ENCODE measurements at regions of chr1 and their contacts with region 1.

Region 1: GRCh38 chr1:168603501-168604110 is 27.2 kb downstream of the XCL1 start:
- DNase-seq: peak; percentile 66 to 86
- ATAC-seq: peak; percentile 96

Region 2: DNA sequence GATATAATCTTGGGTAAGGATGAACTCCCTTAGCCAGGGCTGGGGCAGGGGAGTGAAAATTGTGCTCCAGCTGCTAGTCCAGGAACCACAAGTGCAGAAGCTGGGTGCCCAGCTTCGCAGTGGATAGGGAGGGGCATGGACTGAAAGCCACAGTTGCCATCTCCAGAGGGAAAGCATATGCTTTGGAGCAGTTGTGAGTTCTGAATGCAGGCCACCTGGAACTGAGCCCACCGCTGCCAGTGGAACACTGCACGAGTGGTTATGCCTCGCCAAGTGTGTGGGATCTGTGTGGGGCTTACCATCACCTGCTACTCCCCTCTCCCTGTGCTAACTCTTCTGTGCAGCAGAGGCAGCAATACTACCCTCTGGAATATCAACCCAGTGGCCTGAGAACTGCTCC is 283.8 kb after region 1 on chr1:
- intact Hi-C with region 1: no loop called
- DNase-seq: no peak
- ATAC-seq: no peak

Region 3: DNA sequence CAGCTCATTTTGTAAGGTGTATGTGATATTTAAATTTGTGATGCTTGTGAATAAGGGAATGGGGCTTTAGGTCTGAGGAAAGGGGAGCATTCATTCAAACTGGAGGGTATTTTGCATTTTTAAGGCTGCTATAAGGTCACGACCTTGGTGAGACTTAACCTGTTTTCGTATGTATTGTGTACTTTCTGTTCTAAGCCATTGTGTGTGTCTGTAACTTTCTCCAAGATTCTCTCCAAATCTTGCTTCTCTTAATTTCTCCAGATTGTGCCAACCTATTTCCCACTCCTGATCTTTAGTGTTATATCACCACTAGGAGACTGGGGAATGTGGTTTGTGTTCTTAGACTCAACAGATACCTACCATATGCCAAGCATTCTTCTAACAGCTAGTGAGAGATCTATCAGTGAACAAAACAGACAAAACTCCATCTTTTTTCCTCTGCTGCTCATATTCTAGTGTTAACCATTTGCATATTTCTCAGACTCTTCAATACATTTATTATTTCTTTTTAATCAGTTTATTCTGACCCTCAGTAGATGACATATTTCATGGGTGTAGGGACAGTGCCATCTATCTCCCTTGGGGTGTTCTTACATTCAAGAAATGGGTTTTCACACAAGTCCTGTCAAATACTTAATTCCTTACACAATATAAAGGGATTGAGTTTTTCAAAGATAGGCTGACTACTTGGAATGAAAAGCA is 530.3 kb after region 1 on chr1:
- intact Hi-C with region 1: loop called in 1 of 2 experiments (anchors 10 kb)
- DNase-seq: no peak
- ATAC-seq: peak; percentile 32

Region 4: DNA sequence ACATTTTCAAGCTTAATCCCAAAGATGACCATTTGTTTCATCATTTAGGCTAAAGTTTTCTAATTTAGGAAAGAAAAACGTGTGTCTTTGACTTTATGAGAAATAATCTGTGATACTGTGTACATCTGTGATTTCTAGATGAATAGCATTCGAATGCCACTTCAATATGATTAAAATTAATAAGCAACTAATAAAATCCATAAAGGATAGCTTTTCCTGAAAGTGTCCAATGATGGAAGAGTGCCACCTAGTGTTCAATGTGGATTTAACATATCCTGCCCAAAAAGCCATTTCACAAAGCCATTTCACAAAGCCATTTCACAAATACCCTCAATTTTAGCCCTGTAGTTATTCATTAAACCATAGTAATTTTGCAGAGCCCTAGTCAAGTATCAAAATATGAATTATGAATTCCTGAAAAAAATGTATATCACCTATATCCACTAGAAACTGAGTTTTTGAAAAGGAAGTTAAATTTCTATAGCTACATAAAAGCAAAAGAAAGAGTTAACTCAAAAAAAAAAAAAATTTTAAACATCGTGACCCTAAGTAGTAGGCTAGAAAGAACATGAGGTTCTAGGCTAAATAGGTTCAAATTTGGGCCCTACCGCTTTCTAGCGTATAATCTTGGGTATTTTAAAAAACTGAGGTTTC is 744.9 kb after region 1 on chr1:
- intact Hi-C with region 1: loop called in 1 of 2 experiments (anchors 2 kb)
- DNase-seq: no peak
- ATAC-seq: peak; percentile 36